Brain microvascular endothelial cell (primary cell): ENCODE measurements at regions of chr10 and their contacts with region 1.

Region 1: DNA sequence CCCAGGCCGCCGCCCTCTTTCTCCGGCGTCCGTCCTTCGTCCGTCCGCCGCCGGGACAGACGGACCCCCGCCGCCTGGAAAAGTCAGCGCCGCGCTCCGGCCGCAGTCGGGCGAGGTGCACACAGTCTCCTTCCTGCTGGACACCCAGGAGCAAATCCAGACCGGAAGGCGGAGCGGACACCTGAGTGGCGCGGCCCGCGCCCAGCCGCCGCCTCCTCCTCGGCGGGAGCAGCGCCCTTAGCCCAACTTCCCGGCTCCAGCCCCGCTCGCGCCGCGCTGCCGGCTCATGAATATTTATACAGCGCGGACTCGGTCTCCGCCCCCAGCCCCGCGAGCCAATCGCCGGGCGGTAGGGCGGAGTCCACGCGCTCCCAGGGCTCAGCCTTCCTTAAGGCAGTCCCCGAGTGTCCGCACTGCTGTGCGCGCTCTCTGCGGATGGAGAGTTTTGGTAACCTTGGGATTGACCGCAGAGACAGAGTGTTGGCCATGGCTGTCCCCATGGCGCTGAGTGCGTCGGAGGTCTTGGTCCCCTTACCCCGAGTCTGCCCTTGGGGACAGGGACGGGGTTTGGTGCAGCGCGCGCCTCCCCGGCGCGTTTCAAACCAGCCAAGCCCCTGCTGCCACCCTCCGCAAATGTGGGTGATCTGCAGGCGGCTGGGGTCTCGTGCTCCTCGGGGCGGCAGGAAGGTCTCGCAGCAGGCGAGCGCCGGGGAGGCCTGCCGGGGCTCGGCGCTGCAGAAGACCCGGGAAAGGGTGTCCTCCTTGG is at the start of gene FZD8:
- DNase-seq: peak; percentile 81
- H3K4me3 ChIP-seq: peak within 1 kb of the TSS; percentile 73
- H3K27ac ChIP-seq: peak within 1 kb of the TSS; percentile 2
- H3K27me3 ChIP-seq: no peaks in the 10 kb centered on the region
- CTCF ChIP-seq: peak; percentile 46

Region 2: DNA sequence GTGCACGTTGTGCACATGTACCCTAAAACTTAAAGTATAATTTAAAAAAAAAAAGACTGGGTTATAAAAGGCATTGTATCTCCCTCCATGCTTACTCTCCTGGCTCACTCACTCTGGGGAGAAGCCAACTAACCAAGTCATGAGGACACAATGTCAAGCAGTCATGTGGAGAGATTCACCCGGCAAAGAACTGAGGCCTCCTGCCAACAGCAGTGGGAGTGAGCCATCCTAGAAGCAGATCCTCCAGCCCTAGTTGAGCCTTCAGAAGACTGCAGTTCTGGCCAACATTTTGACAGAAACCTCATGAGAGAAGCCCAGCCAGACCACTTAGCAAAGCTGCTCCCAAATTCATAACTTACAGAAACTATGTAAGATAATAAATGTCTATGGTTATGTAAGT is 521.6 kb after region 1 on chr10:
- in situ Hi-C with region 1: no loop called
- DNase-seq: no peak
- H3K4me3 ChIP-seq: no peak overlapping the region
- H3K27ac ChIP-seq: no peak overlapping the region
- H3K27me3 ChIP-seq: no peaks in the 10 kb centered on the region
- CTCF ChIP-seq: no peak

Region 3: DNA sequence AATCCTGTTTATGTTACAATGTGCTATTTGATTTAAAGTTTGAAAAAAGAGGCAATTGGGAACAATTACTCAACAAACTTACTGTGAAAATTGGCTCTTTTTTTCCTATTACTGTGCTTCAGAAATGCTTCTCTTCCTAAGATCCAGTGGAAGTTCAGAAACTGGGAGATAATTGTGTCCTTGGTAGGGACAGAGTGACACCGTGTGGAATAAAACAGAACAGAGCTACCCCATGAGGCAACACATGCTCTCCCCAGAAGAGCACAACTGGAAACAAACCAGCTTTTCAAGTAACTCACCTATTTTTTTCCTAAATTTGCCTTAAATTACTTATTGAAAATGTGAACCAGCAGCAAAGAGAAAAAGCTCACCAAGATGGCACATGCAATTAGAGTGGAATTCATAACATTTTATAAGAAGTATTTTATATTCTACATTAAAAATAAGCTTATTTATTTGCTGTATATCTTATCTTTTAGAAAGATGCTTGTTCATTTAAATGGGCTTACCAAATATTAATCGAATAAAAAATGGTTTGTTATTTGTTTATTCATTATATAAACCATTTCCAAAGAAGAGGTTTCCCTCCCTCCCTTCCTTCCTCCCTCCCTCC is 1137.1 kb after region 1 on chr10:
- in situ Hi-C with region 1: loop called (anchors 25 kb)
- DNase-seq: peak; percentile 65
- H3K4me3 ChIP-seq: no peak overlapping the region
- H3K27ac ChIP-seq: no peak overlapping the region
- H3K27me3 ChIP-seq: no peaks in the 10 kb centered on the region
- CTCF ChIP-seq: peak; percentile 81